MCF 10A (cell line): ENCODE measurements at regions of chr16 and their contacts with region 1.

Region 1: DNA sequence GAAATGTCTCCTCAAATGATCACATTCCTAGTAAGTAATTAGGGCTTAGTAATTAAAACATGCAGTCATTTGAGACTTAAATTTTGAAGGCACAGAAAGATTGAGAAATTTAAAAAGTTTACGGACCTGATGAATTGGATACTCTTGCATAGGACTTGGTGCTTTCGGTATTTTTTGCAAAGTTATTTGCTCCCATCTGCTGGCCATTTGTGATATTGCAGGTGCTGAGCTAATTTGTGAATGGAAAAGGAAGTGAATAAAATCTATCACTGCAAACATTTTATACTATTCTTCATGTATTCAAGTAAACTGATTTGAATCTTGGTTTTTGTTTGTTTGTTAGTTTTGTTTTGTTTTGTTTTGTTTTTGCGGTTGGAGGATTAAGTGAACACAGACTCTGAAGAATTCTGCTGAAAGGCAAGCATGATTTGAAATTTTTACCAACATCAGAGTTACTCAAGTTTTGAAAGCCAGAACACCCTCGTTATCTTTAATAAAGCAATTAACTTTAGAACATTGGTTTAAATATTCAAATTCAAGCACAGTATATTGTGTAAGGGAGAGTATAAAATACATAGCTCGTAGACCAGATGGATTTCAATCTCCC is 689.5 kb upstream of the RBFOX1 start:
- DNase-seq: peak; percentile 56
- H3K4me3 Mint-ChIP-seq: no peak overlapping the region
- H3K27ac Mint-ChIP-seq: no peak overlapping the region
- H3K4me1 Mint-ChIP-seq: no peaks in the 10 kb centered on the region
- H3K27me3 Mint-ChIP-seq: no peaks in the 10 kb centered on the region
- CTCF ChIP-seq: peak; percentile 75

Region 2: DNA sequence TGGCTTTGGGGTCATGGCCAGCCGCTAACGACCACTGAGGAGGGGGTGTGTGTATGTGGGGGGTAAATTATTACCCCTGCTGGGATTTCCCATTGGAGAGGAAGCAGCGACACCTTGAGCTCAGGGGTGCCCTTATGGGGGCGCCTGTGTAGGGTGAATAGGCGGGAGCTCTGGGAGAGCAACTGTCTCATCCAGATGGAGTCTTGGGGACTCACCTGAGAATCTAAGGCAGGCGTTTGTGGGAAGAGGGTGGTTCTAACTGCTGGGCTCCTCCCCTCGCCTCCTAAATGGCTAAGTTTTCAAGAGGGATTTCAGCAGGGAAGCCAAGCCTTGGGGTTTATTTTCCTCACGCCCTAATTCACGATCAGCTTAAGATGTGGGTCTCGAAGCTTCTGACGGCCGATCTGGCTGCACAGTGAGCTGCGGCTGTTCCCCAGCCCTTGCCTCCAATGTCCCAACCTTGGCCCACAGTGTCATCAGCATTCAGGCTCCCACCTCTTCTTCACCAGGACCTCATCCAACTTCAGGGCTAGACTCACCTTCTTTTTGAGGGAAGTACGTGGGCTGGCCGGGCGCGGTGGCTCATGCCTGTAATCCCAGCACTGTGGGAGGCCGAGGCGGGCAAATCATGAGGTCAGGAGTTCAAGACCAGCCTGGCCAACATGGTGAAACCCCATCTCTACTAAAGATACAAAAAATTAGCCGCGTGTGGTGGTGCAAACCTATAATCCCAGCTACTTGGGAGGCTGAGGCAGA is 1408.7 kb before region 1 on chr16:
- CTCF ChIA-PET with region 1: no interaction called
- POLR2A ChIA-PET with region 1: no interaction called
- intact Hi-C with region 1: loop called (anchors 2 kb)
- DNase-seq: no peak
- H3K4me3 Mint-ChIP-seq: no peak overlapping the region
- H3K27ac Mint-ChIP-seq: no peak overlapping the region
- H3K4me1 Mint-ChIP-seq: no peaks in the 10 kb centered on the region
- H3K27me3 Mint-ChIP-seq: no peaks in the 10 kb centered on the region
- CTCF ChIP-seq: no peak